Activated CD4-positive, alpha-beta memory T cell treated with anti-CD3 and anti-CD28 coated beads, Interleukin-2, amount 10 ng/mL, durations not matched to agents 7 days and 5 days (primary cell): ENCODE measurements at regions of chr4 and their contacts with region 1.

Region 1: GRCh38 chr4:20773144-20773997 is 73.1 kb downstream of the PACRGL start:
- DNase-seq: peak; percentile 21
- H3K4me3 Mint-ChIP-seq: no peak overlapping the region
- H3K27ac Mint-ChIP-seq: no peak overlapping the region
- H3K4me1 Mint-ChIP-seq: no peaks in the 10 kb centered on the region
- H3K27me3 Mint-ChIP-seq: no peaks in the 10 kb centered on the region

Region 2: GRCh38 chr4:20760053-20760452 is 13.3 kb before region 1 on chr4:
- CTCF ChIA-PET with region 1: interaction called, 10 read pairs
- POLR2A ChIA-PET with region 1: no interaction called
- DNase-seq: no peak
- H3K4me3 Mint-ChIP-seq: no peak overlapping the region
- H3K27ac Mint-ChIP-seq: no peak overlapping the region
- H3K4me1 Mint-ChIP-seq: no peaks in the 10 kb centered on the region
- H3K27me3 Mint-ChIP-seq: no peaks in the 10 kb centered on the region

Region 3: GRCh38 chr4:20870436-20870835 is 97.1 kb after region 1 on chr4:
- CTCF ChIA-PET with region 1: no interaction called
- POLR2A ChIA-PET with region 1: no interaction called
- DNase-seq: no peak
- H3K4me3 Mint-ChIP-seq: no peak overlapping the region
- H3K27ac Mint-ChIP-seq: no peak overlapping the region
- H3K4me1 Mint-ChIP-seq: peaks cover 12% of the 10 kb centered on the region
- H3K27me3 Mint-ChIP-seq: no peaks in the 10 kb centered on the region

Region 4: DNA sequence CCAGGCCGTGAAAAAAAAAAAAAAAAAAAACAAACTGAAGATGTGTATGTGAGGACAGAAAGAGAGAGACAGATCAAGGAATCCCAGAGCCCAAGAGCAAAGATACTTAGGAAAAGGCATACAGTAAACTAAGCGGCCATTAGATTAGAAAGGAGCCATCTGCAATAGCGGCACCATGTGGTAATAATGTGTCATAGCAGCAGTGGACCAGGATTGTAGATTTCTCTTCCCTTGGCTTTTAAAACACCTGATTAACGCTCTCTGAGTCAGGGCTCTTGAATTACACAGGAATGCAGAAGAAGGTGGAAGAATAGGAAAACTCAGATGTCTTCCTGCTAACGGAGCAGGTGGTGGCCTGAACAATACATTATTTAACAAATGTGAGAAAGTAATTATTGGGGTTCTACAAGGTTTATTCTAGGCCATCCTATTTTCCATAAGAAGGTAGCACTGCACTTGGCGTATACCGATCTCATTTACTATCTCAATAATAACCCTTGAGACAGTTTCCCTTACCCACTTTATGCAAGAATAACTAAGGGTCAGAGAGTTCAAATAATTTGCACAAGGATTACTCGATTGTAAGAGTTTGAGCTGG is 992.5 kb after region 1 on chr4:
- CTCF ChIA-PET with region 1: interaction called, 15 read pairs
- POLR2A ChIA-PET with region 1: no interaction called
- DNase-seq: peak; percentile 21
- H3K4me3 Mint-ChIP-seq: no peak overlapping the region
- H3K27ac Mint-ChIP-seq: no peak overlapping the region
- H3K4me1 Mint-ChIP-seq: peaks cover 3% of the 10 kb centered on the region
- H3K27me3 Mint-ChIP-seq: no peaks in the 10 kb centered on the region